SK-N-SH (cell line): ENCODE measurements at regions of chrX and their contacts with region 1.

Region 1: GRCh38 chrX:24395775-24396174 is 35.3 kb downstream of the SUPT20HL1 start:
- DNase-seq: peak; percentile 54
- H3K4me3 ChIP-seq: no peak overlapping the region
- H3K27ac ChIP-seq: no peak overlapping the region
- H3K4me1 ChIP-seq: no peaks in the 10 kb centered on the region
- H3K27me3 ChIP-seq: peaks cover 30% of the 10 kb centered on the region; the same call in 1 of the 2 replicates
- CTCF ChIP-seq: peak; percentile 81
- EP300 ChIP-seq: no peak
- RAD21 ChIP-seq: peak; percentile 97

Region 2: DNA sequence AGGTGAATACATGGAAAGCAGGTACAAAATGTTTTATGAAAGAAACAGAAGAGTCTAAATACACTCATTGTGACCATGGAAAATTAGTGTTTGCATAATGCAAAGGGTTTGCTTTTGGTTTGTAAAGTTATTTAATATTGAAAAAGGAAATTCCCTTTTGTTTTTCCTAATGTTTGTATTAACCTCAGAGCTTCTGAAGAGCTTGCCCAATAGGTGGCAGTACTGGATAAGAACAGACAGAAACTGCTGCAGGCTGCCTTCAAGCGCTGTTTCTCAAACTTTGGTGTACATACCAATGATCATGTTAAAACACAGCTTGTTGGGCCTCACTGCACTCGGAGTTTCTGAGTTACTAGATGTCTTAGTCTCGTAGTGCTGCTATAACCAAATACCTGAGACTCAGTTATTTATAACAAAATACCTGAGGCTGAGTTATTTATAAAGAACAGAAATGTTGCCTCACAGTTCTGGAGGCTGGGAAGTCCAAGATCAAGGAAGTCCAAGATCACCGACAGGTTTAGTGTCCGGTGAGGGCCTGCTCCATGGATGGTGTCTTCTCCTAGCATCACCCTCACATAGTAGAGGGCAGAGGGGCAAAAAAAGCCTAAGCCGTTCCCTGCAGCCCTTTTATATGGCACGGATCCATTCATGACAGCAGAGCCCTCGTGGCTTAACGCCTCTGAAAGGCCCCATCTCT is 136.1 kb before region 1 on chrX:
- CTCF ChIA-PET with region 1: interaction called, 16 read pairs
- POLR2A ChIA-PET with region 1: no interaction called
- DNase-seq: peak; percentile 49
- H3K4me3 ChIP-seq: no peak overlapping the region; a peak in 1 of 4 replicates
- H3K27ac ChIP-seq: no peak overlapping the region
- H3K4me1 ChIP-seq: no peaks in the 10 kb centered on the region
- H3K27me3 ChIP-seq: peaks cover 8% of the 10 kb centered on the region
- CTCF ChIP-seq: peak; percentile 84
- EP300 ChIP-seq: no peak
- RAD21 ChIP-seq: peak; percentile 82

Region 3: GRCh38 chrX:24294620-24295019 is 101.2 kb before region 1 on chrX:
- CTCF ChIA-PET with region 1: interaction called, 20 read pairs
- POLR2A ChIA-PET with region 1: no interaction called
- DNase-seq: peak; percentile 31
- H3K4me3 ChIP-seq: no peak overlapping the region
- H3K27ac ChIP-seq: no peak overlapping the region
- H3K4me1 ChIP-seq: no peaks in the 10 kb centered on the region; a peak in 1 of 4 replicates
- H3K27me3 ChIP-seq: no peaks in the 10 kb centered on the region; the same call in 1 of the 2 replicates
- CTCF ChIP-seq: peak; percentile 56
- EP300 ChIP-seq: no peak
- RAD21 ChIP-seq: peak; percentile 63

Region 4: GRCh38 chrX:24371391-24371972 is 24.3 kb before region 1 on chrX:
- CTCF ChIA-PET with region 1: interaction called, 18 read pairs
- POLR2A ChIA-PET with region 1: no interaction called
- DNase-seq: peak; percentile 69
- H3K4me3 ChIP-seq: no peak overlapping the region
- H3K27ac ChIP-seq: no peak overlapping the region
- H3K4me1 ChIP-seq: no peaks in the 10 kb centered on the region; a peak in 1 of 4 replicates
- H3K27me3 ChIP-seq: no peaks in the 10 kb centered on the region; the same call in 1 of the 2 replicates
- CTCF ChIP-seq: peak; percentile 66
- EP300 ChIP-seq: no peak
- RAD21 ChIP-seq: peak; percentile 57

Region 5: DNA sequence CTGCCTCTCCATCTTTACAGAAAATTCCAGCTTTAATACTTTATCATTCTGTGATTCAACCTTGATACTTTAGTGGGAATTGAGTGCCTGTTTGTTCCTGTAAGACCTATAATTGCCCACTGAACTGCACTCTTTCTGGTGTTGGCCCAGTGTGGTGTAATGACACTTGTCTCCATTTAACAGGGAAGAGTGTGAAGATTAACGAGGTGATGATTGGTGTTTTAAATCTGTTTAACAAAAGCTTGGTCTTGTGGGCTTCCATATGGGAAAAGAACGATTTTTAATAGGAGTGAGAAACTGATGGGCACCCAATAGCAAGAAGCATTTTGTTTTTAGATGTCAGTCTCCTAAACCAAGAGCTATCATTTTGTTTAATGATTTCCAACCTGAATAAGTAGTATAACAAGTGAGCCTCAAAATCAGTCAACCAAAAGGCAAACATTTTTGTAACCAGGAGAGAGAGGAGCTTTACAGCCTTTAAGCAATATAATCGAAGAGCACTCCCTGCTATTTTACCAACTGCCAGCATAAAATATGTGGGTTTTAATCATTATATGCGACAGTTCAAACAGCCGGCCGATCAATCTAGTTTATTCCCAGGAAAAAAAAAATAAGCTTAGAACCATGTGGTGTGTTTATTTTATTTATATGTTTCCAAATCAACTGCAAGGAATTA is 14.9 kb after region 1 on chrX:
- CTCF ChIA-PET with region 1: interaction called, 17 read pairs
- POLR2A ChIA-PET with region 1: no interaction called
- DNase-seq: no peak
- H3K4me3 ChIP-seq: no peak overlapping the region
- H3K27ac ChIP-seq: no peak overlapping the region
- H3K4me1 ChIP-seq: no peaks in the 10 kb centered on the region
- H3K27me3 ChIP-seq: no peaks in the 10 kb centered on the region; the same call in 1 of the 2 replicates
- CTCF ChIP-seq: no peak
- EP300 ChIP-seq: no peak
- RAD21 ChIP-seq: no peak

Region 6: DNA sequence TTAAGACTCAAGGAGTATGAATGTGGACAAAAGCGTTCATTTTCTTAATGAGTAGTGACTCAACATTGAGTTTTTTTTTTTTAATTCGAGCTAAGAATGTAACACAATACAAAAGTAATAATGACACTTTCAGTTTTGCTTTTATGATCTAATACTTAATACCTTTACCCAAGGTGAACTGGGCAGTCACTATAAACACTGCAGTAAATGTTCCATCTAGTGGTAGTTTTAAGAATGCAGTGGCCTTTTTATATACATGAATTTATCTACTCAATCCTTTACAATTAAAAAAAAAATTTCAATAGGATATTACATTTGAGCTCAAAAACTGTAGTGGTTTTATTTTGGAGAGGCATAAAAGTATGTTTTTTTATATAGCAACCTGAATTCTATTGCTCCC is 103.2 kb after region 1 on chrX:
- CTCF ChIA-PET with region 1: interaction called, 80 read pairs
- POLR2A ChIA-PET with region 1: no interaction called
- DNase-seq: peak; percentile 30
- H3K4me3 ChIP-seq: no peak overlapping the region
- H3K27ac ChIP-seq: no peak overlapping the region
- H3K4me1 ChIP-seq: no peaks in the 10 kb centered on the region; a peak in 1 of 4 replicates
- H3K27me3 ChIP-seq: no peaks in the 10 kb centered on the region
- CTCF ChIP-seq: peak; percentile 77
- EP300 ChIP-seq: no peak
- RAD21 ChIP-seq: peak; percentile 61